ENCODE measurements at regions of chr20 and their contacts with region 1.

Region 1: DNA sequence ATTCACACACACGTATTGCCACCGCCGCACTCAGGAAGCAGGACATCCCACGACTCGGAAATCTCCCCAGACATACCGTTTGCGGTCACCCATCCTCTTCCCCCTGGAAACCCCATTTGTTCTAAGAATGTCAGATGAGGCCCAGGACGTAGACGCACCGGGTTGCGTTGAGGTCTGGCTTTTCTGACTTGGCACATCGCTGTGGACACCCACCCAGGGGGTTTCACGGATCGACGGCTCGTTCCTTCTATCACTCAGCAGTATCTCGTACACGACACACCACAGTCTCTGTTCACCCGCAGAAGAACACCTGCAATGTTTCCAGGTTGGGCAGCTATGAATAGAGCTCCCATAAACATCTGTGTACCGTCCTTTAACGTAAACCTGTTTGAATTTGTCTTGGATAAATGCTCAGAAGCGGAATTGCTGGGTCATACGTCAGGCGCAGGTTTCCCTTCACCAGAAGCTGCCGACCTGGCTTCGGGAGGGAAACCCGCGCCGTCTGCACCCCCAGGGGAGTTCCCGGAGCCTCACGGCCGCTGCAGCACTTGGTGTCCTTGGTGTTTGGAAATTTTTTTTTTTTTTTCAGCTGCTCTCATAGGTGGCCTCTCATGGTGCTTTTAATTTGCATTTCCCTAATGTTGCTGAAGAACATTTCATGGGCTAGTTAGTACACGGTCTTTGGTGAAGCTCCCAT is 9.3 kb upstream of the EEF1A2 start:
- DNase-seq: no peak
- H3K4me3 ChIP-seq: no peak overlapping the region
- H3K27ac ChIP-seq: no peak overlapping the region
- H3K4me1 ChIP-seq: no peaks in the 10 kb centered on the region
- H3K27me3 ChIP-seq: peaks cover 4% of the 10 kb centered on the region
- CTCF ChIP-seq: no peak

Region 2: GRCh38 chr20:63103402-63104309 is 404.6 kb before region 1 on chr20:
- CTCF ChIA-PET with region 1: interaction called, 11 read pairs
- POLR2A ChIA-PET with region 1: no interaction called
- intact Hi-C with region 1: no loop called
- DNase-seq: peak; percentile 37
- H3K4me3 ChIP-seq: no peak overlapping the region
- H3K27ac ChIP-seq: no peak overlapping the region
- H3K4me1 ChIP-seq: no peaks in the 10 kb centered on the region
- H3K27me3 ChIP-seq: peaks cover 38% of the 10 kb centered on the region
- CTCF ChIP-seq: no peak

Region 3: DNA sequence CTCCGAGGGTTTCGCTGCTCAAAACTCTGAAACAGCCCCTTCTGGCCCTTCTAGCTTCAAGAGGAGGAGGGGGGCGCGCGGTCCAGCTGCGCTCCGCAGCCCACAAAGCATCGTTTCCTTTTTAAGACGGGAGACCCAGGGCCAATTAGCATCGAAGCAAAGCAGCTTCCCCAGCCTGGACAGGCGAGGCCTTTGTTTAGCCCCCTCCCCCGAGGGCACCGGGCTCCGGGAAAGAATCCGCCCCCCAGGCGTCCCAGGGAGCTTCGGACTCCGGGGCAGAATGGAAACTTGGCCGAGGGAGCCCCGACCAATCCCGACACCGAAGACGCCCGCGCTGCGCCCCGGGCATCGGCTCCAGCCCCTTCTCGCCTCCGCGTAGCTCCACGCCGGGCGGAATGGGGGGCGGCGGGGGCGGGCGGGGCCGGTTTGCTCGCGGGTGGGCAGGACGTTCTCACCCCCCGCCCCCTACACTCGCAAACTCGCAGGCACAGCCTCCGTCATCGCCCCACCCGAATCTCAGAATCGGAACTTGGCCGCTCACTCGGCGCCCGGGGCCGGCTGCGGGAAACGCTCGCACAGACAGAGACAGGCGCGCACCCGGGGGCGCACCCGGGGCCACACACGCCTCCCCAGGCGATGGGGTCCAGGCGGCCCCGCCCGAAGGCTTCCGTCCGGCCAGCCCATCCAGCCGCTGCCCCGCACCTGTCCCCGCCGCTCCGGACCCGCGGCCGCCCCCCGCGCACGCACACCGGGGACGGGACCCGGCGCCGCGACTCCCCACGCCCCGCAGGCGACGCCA is 254.6 kb before region 1 on chr20:
- CTCF ChIA-PET with region 1: no interaction called
- POLR2A ChIA-PET with region 1: no interaction called
- intact Hi-C with region 1: no loop called
- DNase-seq: no peak
- H3K4me3 ChIP-seq: no peak overlapping the region
- H3K27ac ChIP-seq: no peak overlapping the region
- H3K4me1 ChIP-seq: no peaks in the 10 kb centered on the region
- H3K27me3 ChIP-seq: peaks cover 62% of the 10 kb centered on the region
- CTCF ChIP-seq: no peak

Region 4: GRCh38 chr20:63895202-63895951 is 387.2 kb after region 1 on chr20:
- CTCF ChIA-PET with region 1: no interaction called
- POLR2A ChIA-PET with region 1: interaction called, 12 read pairs
- intact Hi-C with region 1: no loop called
- DNase-seq: no peak
- H3K4me3 ChIP-seq: peak overlapping the region; percentile 67
- H3K27ac ChIP-seq: peak overlapping the region; percentile 48
- H3K4me1 ChIP-seq: peaks cover 9% of the 10 kb centered on the region
- H3K27me3 ChIP-seq: no peaks in the 10 kb centered on the region
- CTCF ChIP-seq: no peak